CD4-positive, alpha-beta T cell (primary cell): ENCODE measurements at regions of chr7 and their contacts with region 1.

Region 1: GRCh38 chr7:78020136-78020873 is 221.7 kb downstream of the PHTF2 start:
- DNase-seq: peak in 5 of 14 experiments; percentile 16 to 71 (median 60)
- ATAC-seq: peak; percentile 54
- H3K4me3 ChIP-seq: peak overlapping the region; percentile 69
- H3K4me3 Mint-ChIP-seq: peak overlapping the region; percentile 89
- H3K27ac ChIP-seq: no peak overlapping the region
- H3K27ac Mint-ChIP-seq: peak overlapping the region; percentile 61
- H3K4me1 ChIP-seq: peaks cover 11% of the 10 kb centered on the region
- H3K4me1 Mint-ChIP-seq: peaks cover 11% of the 10 kb centered on the region
- H3K27me3 ChIP-seq: peaks cover 14 to 18% of the 10 kb centered on the region in 2 experiments
- H3K27me3 Mint-ChIP-seq: peaks cover 34% of the 10 kb centered on the region
- CTCF ChIP-seq: peak; percentile 78

Region 2: GRCh38 chr7:78039790-78040776 is 19.8 kb after region 1 on chr7:
- CTCF ChIA-PET with region 1: interaction called, 17 read pairs
- POLR2A ChIA-PET with region 1: no interaction called
- intact Hi-C with region 1: loop called in 1 of 2 experiments (anchors 2 kb)
- DNase-seq: peak in 12 of 14 experiments; percentile 26 to 72 (median 42)
- ATAC-seq: peak; percentile 60
- H3K4me3 ChIP-seq: no peak overlapping the region
- H3K4me3 Mint-ChIP-seq: no peak overlapping the region
- H3K27ac ChIP-seq: no peak overlapping the region
- H3K27ac Mint-ChIP-seq: no peak overlapping the region
- H3K4me1 ChIP-seq: peaks cover 6% of the 10 kb centered on the region
- H3K4me1 Mint-ChIP-seq: no peaks in the 10 kb centered on the region
- H3K27me3 ChIP-seq: peaks cover 5 to 8% of the 10 kb centered on the region in 2 experiments
- H3K27me3 Mint-ChIP-seq: peaks cover 67% of the 10 kb centered on the region
- CTCF ChIP-seq: peak; percentile 75

Region 3: GRCh38 chr7:80018941-80019752 is 1998.8 kb after region 1 on chr7:
- CTCF ChIA-PET with region 1: no interaction called
- POLR2A ChIA-PET with region 1: no interaction called
- intact Hi-C with region 1: loop called in 1 of 2 experiments (anchors 5 kb)
- DNase-seq: peak in 5 of 14 experiments; percentile 4 to 66 (median 48)
- ATAC-seq: peak; percentile 46
- H3K4me3 ChIP-seq: no peak overlapping the region
- H3K4me3 Mint-ChIP-seq: no peak overlapping the region
- H3K27ac ChIP-seq: no peak overlapping the region
- H3K27ac Mint-ChIP-seq: no peak overlapping the region
- H3K4me1 ChIP-seq: no peaks in the 10 kb centered on the region
- H3K4me1 Mint-ChIP-seq: no peaks in the 10 kb centered on the region
- H3K27me3 ChIP-seq: no peaks in the 10 kb centered on the region
- H3K27me3 Mint-ChIP-seq: peaks cover 5% of the 10 kb centered on the region
- CTCF ChIP-seq: peak; percentile 68